ENCODE measurements at regions of chr17 and their contacts with region 1.

Region 1: GRCh38 chr17:5031365-5032082 is 3.7 kb downstream of the SLC52A1 start:
- DNase-seq: no peak
- H3K4me3 ChIP-seq: peak overlapping the region; percentile 43 to 58
- H3K27ac ChIP-seq: peak overlapping the region; percentile 34
- H3K4me1 ChIP-seq: peaks cover 8% of the 10 kb centered on the region
- H3K27me3 ChIP-seq: no peaks in the 10 kb centered on the region
- CTCF ChIP-seq: peak; percentile 53 to 82 (median 81)
- POLR2A ChIP-seq: no peak

Region 2: DNA sequence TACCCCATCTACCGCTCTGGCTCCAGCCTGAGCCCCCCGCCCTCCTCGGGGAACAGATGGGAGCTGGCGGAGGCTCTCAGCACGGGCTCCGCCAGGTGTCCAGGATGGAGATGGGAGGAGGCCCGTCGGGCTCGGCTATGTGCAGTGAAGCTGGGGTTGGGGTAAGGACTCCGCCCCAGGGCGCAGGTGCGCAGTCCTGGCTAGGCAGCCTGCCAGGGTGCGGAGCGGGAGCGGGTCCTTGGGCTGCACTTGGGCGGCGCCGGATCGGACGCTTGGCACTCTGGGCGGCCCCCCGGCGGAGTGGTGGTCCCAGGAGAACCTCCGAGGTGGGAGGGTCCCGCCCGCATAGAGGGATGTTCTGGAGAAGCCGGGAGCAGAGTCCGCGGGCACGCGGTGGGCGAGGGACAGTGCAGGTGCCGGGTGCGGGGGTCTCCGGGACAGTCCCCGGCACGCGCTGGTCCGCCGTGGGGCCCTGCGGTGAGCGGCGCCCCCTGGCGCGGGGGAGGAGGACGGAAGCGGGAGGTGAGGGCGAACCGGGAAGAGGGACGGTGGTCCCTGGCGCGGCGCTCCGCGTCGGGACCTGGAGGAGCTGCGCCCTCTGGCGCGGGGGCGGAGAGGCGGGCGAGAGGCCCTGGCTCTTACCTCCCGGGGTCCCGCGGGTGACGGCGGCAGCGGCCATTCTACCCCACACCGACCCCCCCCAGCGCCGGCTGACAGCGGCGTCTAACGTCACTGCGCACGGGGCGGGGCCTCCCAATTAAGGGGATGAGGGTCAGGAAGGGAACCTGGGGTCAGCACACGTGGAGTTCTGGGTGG is 44.4 kb before region 1 on chr17 and contains the start of gene CAMTA2:
- intact Hi-C with region 1: loop called (anchors 10 kb)
- DNase-seq: no peak
- H3K4me3 ChIP-seq: peak within 1 kb of the TSS; percentile 66 to 95
- H3K27ac ChIP-seq: peak within 1 kb of the TSS; percentile 89
- H3K4me1 ChIP-seq: peaks cover 32% of the 10 kb centered on the region
- H3K27me3 ChIP-seq: no peaks in the 10 kb centered on the region
- CTCF ChIP-seq: peak; percentile 22 to 89 (median 63)
- POLR2A ChIP-seq: peak in 1 of 2 donors; percentile 81
- total RNA-seq, gene CAMTA2: 36.3 TPM

Region 3: GRCh38 chr17:4998742-4999429 is 32.6 kb before region 1 on chr17:
- intact Hi-C with region 1: no loop called
- DNase-seq: no peak
- H3K4me3 ChIP-seq: peak overlapping the region; percentile 85 to 95
- H3K27ac ChIP-seq: peak overlapping the region; percentile 89
- H3K4me1 ChIP-seq: peaks cover 33% of the 10 kb centered on the region
- H3K27me3 ChIP-seq: no peaks in the 10 kb centered on the region
- CTCF ChIP-seq: no peak
- POLR2A ChIP-seq: no peak